Left cardiac atrium (tissue), 4 donors: ENCODE measurements at regions of chr6 and their contacts with region 1.

Region 1: GRCh38 chr6:133973109-133973971 is 20.3 kb downstream of the TBPL1 start:
- DNase-seq: no peak
- ATAC-seq: no peak

Region 2: DNA sequence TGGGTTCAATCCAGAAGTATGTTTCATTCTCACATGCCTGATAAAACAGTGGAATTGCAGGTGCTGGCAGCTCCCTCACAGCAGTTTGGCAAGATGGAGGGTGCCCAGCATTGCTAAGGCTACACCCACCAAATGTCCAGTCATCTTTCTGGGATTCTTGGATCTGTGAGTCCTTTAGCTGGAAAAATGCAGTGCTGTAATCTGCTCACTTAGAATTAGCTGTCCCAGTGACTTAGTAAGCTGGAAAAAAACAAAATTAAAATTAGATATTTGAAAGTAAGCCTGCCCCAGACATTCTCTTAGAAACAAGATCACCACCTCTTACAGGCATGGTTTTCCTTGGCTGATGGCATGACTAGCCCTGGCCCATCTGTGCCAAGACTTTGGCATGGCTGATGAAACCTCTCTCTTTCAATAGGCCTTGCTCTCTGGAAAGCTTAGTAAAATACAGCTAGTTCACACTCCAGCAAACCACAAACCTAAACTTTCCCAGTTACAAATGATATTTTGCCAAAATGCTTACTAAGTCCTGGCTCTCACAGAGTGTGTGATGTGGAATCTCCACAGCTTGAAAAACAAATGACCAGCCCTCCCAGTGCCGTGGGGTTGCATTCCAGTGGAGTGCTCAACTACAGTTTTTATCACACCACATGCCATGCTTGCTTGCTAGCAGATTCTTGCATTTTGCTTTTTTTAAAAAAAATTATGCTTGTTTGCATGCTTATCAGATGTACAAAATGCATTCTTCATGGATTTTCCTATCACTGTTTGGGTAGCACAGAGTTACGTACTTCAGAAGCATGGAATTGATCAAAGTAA is 470.7 kb before region 1 on chr6:
- intact Hi-C with region 1: no loop called
- DNase-seq: peak; percentile 28
- ATAC-seq: peak; percentile 76 to 93

Region 3: GRCh38 chr6:133748628-133749027 is 224.7 kb before region 1 on chr6:
- intact Hi-C with region 1: no loop called
- DNase-seq: no peak
- ATAC-seq: no peak

Region 4: GRCh38 chr6:133887156-133887879 is 86.0 kb before region 1 on chr6:
- intact Hi-C with region 1: no loop called
- DNase-seq: no peak
- ATAC-seq: no peak

Region 5: GRCh38 chr6:134063966-134064445 is 90.7 kb after region 1 on chr6:
- intact Hi-C with region 1: loop called (anchors 5 kb)
- DNase-seq: peak; percentile 34
- ATAC-seq: peak; percentile 90 to 93